ENCODE measurements at regions of chr2 and their contacts with region 1.

Region 1: DNA sequence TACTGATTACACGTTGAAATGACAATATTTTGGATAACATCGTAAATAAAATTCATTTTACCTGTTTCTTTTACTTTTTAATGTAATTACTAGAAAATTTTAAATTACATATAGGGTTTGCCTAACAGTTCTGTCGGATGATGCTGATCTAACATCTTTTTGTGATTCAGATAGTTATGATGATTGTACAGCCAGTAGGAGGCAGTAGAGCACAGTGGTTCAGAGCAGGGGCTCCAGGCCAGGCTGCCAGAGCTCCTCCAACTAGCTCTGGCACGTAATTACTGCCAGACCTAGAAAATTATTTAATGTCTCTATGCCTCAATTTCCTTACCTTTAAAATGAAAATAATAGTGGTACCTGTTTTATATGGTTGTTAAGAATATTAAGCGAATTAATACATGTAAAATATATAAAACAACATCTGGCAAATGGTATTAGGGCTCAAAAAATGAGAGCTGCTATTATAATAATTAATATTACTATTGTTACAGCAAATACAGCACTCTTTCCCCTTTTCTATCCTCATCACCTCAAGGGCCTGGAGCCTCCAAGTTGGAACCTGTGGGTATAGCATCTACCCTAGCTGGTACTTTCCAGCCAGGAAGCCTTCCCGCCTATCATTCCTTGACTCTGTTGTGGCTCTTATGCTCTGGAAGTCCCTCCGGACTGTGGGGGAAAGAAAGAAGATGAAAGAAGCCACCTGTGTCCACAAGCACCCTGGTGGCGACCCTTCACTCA is 47.7 kb upstream of the PLA2R1 start:
- DNase-seq: no peak
- ATAC-seq: peak; percentile 84
- H3K4me3 ChIP-seq: no peak overlapping the region
- H3K27ac ChIP-seq: no peak overlapping the region
- H3K4me1 ChIP-seq: peaks cover 13% of the 10 kb centered on the region
- H3K27me3 ChIP-seq: no peaks in the 10 kb centered on the region
- CTCF ChIP-seq: peak; percentile 68 to 87 (median 80)
- EP300 ChIP-seq: no peak
- POLR2A ChIP-seq: no peak
- RAD21 ChIP-seq: peak; percentile 90

Region 2: DNA sequence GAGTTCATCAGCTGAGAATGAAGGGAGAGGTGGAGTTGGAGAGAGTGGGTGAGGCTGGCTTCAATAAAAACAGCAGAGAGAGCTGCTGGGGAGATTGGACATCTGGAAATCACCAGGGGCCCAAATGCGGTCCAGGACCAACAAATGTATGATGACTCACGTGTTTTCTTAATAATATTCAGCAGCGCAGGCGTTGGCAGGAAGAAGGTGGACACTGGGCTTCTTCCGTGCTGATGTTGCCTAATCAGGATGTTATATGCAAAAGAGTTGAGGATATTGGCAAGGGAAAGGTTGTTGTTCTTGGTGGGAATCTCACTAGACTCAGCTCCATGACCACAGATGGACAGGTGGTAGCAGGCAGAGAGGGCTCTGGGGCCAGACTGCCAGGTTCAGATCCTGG is 34.9 kb before region 1 on chr2:
- CTCF ChIA-PET with region 1: interaction called, 12 read pairs
- POLR2A ChIA-PET with region 1: no interaction called
- RAD21 ChIA-PET with region 1: no interaction called
- SMC1A ChIA-PET with region 1: no interaction called
- in situ Hi-C with region 1: no loop called
- intact Hi-C with region 1: no loop called
- DNase-seq: no peak
- ATAC-seq: no peak
- H3K4me3 ChIP-seq: no peak overlapping the region
- H3K27ac ChIP-seq: no peak overlapping the region
- H3K4me1 ChIP-seq: no peaks in the 10 kb centered on the region
- H3K27me3 ChIP-seq: peaks cover 0 to 2% of the 10 kb centered on the region in 2 experiments; a peak in 1 of 4 replicates
- CTCF ChIP-seq: no peak
- EP300 ChIP-seq: no peak
- POLR2A ChIP-seq: no peak
- RAD21 ChIP-seq: no peak

Region 3: GRCh38 chr2:160210599-160211138 is 100.6 kb after region 1 on chr2:
- CTCF ChIA-PET with region 1: interaction called, 122 read pairs
- POLR2A ChIA-PET with region 1: no interaction called
- RAD21 ChIA-PET with region 1: interaction called, 51 read pairs
- SMC1A ChIA-PET with region 1: interaction called, 44 read pairs
- in situ Hi-C with region 1: loop called (anchors 5 kb)
- intact Hi-C with region 1: loop called (anchors 1 kb)
- DNase-seq: peak; percentile 75
- ATAC-seq: peak; percentile 90
- H3K4me3 ChIP-seq: no peak overlapping the region
- H3K27ac ChIP-seq: no peak overlapping the region
- H3K4me1 ChIP-seq: peaks cover 31% of the 10 kb centered on the region
- H3K27me3 ChIP-seq: peaks cover 0 to 2% of the 10 kb centered on the region in 2 experiments; a peak in 3 of 4 replicates
- CTCF ChIP-seq: peak; percentile 89 to 96 (median 95)
- EP300 ChIP-seq: peak in 1 of 2 experiments; percentile 86; a peak in 2 of 4 replicates
- POLR2A ChIP-seq: no peak
- RAD21 ChIP-seq: peak; percentile 86

Region 4: DNA sequence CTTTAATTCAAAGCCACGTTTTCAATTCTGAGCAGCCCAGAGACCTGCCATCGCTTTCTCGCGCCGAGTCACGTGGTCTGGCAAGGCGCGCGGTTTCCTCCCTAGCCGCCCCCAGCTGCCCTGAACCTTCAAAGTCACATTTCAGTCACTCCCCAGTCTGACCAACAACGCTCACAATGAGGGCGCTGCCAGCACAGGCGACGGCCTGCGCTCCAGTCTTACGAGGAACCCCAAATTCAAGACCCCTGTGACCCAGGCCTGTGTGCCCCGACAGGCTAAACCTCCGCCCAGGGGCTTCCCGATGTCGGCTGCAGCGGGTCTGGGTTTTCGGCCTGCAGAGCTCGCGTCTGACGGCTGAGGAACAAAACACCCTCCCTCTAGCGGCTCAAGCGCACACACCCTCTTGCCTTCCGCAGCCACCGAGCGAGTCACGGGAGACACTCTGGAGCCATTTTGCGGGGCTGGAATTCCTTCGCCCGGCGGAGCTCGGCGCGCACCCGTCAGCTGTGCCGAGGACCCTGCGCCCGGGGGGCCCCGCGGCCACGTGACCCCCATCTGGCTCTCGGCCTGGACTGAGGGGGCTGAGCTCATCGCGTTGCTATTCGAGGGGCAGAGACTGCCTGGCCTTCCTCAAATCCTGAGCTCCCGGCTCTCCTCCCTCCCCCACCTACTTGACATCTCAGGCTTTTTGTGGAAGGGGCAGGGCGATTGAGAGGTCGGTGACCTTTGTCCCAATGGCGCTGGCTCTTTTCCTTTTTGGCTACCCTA is 159.9 kb after region 1 on chr2:
- CTCF ChIA-PET with region 1: interaction called, 8 read pairs
- POLR2A ChIA-PET with region 1: no interaction called
- RAD21 ChIA-PET with region 1: interaction called, 4 read pairs
- SMC1A ChIA-PET with region 1: interaction called, 5 read pairs
- in situ Hi-C with region 1: no loop called
- intact Hi-C with region 1: loop called (anchors 5 kb)
- DNase-seq: peak; percentile 11
- ATAC-seq: peak; percentile 81
- H3K4me3 ChIP-seq: peak overlapping the region; percentile 40; the same call in 1 of the 2 replicates
- H3K27ac ChIP-seq: no peak overlapping the region
- H3K4me1 ChIP-seq: peaks cover 3% of the 10 kb centered on the region
- H3K27me3 ChIP-seq: peaks cover 2 to 5% of the 10 kb centered on the region in 2 experiments; a peak in 2 of 4 replicates
- CTCF ChIP-seq: peak; percentile 55 to 70 (median 56)
- EP300 ChIP-seq: no peak
- POLR2A ChIP-seq: no peak
- RAD21 ChIP-seq: 0 out of 2 replicates have a peak, but pooled peaks have one; percentile 11

Region 5: DNA sequence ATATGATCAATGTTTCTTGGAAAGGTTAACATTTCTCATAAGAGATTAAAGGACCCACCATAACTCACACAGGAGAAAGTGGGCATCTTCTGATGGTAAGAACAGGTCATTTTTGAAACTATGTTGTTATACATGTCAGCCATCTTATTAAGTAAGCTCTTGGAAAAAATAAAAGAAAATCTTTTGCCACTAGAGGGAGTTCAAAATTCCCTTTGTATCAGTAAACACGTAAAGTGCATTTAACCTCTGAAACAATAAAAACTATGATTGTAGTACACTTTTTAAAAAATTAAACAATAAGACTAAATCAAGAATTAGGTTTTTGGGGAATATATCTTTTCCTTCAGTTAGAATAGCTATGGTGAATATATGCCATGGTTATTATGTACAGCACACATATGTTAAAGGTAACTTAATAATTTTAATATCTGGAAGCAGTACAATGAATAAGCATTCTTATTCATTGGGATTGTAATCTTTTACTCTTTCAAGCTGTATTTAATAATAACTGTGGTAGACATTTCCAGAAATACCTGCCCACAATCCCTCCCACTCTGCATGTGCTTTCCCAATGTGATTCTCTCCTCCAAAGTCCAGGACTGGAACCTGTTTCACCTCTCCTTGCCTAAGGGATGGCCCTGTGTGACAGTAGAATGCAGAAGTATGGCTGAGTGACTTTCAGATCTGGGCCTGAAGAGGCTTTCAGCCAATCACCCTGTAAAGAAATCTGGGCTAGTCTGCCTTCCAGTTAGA is 319.3 kb after region 1 on chr2:
- CTCF ChIA-PET with region 1: interaction called, 5 read pairs
- POLR2A ChIA-PET with region 1: no interaction called
- RAD21 ChIA-PET with region 1: no interaction called
- SMC1A ChIA-PET with region 1: interaction called, 3 read pairs
- in situ Hi-C with region 1: no loop called
- intact Hi-C with region 1: loop called (anchors 5 kb)
- DNase-seq: no peak
- ATAC-seq: peak; percentile 71
- H3K4me3 ChIP-seq: no peak overlapping the region
- H3K27ac ChIP-seq: no peak overlapping the region
- H3K4me1 ChIP-seq: no peaks in the 10 kb centered on the region; the same call in 1 of the 2 replicates
- H3K27me3 ChIP-seq: no peaks in the 10 kb centered on the region
- CTCF ChIP-seq: peak; percentile 31 to 47 (median 41); a peak in 5 of 6 replicates
- EP300 ChIP-seq: no peak
- POLR2A ChIP-seq: no peak
- RAD21 ChIP-seq: no peak